HCT116 (cell line): ENCODE measurements at regions of chr7 and their contacts with region 1.

Region 1: GRCh38 chr7:156684661-156685060 is 44.1 kb downstream of the RNF32 start:
- DNase-seq: no peak
- ATAC-seq: no peak
- H3K4me3 ChIP-seq: no peak overlapping the region
- H3K27ac ChIP-seq: no peak overlapping the region
- H3K4me1 ChIP-seq: no peaks in the 10 kb centered on the region
- H3K27me3 ChIP-seq: no peaks in the 10 kb centered on the region
- CTCF ChIP-seq: no peak
- POLR2A ChIP-seq: no peak
- RAD21 ChIP-seq: no peak

Region 2: DNA sequence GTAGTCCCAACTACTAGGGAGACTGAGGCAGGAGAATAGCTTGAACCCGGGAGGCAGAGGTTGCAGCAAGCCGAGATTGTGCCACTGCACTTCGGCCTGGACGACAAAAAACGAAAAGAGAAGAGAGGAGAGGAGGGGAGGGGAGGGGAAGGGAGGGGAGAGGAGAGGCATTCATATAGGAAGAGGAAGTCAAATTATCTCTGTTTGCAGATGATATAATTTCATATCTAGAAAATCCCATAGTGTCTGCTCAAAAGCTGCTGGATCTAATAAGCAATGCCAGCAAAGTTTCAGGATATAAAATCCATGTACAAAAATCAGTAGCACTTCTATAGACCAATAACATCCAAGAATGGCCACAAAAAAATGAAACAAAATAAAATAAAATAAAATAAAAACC is 88.1 kb after region 1 on chr7:
- CTCF ChIA-PET with region 1: no interaction called
- POLR2A ChIA-PET with region 1: no interaction called
- RAD21 ChIA-PET with region 1: interaction called in 1 of 2 experiments, 11 read pairs
- intact Hi-C with region 1: no loop called
- DNase-seq: no peak
- ATAC-seq: no peak
- H3K4me3 ChIP-seq: no peak overlapping the region
- H3K27ac ChIP-seq: no peak overlapping the region
- H3K4me1 ChIP-seq: peaks cover 0 to 12% of the 10 kb centered on the region in 2 experiments; a peak in 1 of 4 replicates
- H3K27me3 ChIP-seq: no peaks in the 10 kb centered on the region
- CTCF ChIP-seq: no peak
- POLR2A ChIP-seq: no peak
- RAD21 ChIP-seq: no peak

Region 3: GRCh38 chr7:156785998-156786543 is 101.4 kb after region 1 on chr7:
- CTCF ChIA-PET with region 1: no interaction called
- POLR2A ChIA-PET with region 1: no interaction called
- RAD21 ChIA-PET with region 1: no interaction called
- intact Hi-C with region 1: loop called (anchors 5 kb)
- DNase-seq: no peak
- ATAC-seq: no peak
- H3K4me3 ChIP-seq: no peak overlapping the region
- H3K27ac ChIP-seq: no peak overlapping the region
- H3K4me1 ChIP-seq: no peaks in the 10 kb centered on the region
- H3K27me3 ChIP-seq: no peaks in the 10 kb centered on the region
- CTCF ChIP-seq: no peak
- POLR2A ChIP-seq: no peak
- RAD21 ChIP-seq: no peak